Posterior vena cava (tissue), 2 donors: ENCODE measurements at regions of chr12 and their contacts with region 1.

Region 1: DNA sequence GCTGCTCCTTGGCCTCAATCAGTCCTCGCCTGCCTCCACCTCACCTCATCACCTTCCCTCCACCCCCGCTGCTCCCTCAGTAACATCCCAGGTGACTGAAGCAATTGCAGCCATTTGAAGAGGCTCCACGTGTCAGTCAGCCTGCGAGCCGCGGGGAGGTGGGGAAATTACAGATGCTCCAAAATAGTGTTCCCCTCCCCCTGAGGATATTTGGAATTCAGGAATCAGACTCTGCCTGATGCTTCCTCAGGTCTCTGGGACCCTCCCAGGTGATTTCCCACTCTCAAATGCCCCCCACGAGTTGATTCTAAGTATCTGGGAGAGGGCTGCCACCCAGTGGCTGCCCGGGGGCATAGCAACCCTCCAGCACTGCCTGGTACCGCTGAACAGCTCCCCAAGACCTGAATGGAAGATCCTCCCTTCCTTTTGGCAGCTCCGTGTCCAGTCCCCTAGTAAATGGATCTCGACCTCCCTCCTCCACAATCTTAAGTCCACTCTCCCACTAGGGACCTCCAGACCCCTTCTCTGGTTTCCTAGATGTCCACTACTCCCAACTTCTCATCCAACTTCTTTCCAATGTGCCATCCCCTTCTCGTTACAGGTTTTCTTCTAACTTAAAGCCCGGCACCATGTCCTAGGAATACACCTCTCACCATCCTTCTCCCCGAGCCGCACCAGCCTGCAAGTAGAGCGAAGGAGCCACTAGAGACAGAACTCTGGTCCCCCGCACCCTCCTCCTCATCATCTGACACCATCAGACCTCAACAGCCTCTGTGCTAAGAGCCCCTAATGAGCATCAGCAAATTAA is 1.4 kb upstream of the ASIC1 start:
- DNase-seq: no peak

Region 2: GRCh38 chr12:49866859-49867579 is 189.0 kb before region 1 on chr12:
- intact Hi-C with region 1: loop called in 1 of 2 experiments (anchors 10 kb)
- DNase-seq: peak; percentile 91

Region 3: DNA sequence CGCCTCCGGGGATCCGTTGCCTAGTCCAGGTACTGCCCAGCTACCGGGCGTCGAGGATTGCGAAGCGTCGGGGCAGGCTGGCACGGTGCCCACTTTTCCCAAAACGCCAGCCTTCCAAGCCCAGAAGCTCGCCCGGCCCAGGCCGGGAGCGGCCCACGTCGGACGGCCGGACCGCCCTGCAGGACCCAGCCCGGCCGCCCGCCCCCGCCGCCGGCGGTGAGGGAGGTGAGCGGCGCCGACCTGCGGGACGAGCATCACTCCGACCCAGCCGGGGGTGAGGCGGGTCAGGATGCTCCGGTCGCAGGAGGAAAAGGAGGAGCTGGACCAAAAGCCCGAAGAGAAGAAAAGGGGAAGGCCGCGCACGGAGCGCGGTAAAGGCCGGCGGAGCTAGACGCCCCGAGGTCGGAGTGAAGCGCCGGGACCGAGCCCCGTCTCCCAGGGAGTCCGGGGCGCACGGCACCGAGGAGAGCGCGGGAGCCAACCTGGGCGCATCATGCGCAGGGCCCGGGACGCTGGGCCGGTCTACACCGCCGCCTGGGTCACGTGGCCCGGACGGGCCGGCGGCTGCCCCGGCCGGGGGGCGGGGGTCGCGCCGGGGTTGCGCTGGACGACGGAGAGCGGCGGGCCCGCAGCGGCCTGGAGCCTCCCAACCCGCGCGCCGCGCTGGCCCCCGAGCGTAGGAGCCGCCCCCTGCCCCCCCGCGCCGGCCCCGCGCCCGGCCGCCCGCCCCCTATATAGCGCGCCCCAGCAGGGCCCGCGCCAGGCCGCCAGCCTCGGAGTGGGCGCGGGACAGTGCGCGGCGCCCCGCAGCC is 94.7 kb before region 1 on chr12 and contains the start of gene AQP5:
- intact Hi-C with region 1: loop called (anchors 1 to 5 kb)
- DNase-seq: no peak
- total RNA-seq, gene AQP5: not detected

Region 4: DNA sequence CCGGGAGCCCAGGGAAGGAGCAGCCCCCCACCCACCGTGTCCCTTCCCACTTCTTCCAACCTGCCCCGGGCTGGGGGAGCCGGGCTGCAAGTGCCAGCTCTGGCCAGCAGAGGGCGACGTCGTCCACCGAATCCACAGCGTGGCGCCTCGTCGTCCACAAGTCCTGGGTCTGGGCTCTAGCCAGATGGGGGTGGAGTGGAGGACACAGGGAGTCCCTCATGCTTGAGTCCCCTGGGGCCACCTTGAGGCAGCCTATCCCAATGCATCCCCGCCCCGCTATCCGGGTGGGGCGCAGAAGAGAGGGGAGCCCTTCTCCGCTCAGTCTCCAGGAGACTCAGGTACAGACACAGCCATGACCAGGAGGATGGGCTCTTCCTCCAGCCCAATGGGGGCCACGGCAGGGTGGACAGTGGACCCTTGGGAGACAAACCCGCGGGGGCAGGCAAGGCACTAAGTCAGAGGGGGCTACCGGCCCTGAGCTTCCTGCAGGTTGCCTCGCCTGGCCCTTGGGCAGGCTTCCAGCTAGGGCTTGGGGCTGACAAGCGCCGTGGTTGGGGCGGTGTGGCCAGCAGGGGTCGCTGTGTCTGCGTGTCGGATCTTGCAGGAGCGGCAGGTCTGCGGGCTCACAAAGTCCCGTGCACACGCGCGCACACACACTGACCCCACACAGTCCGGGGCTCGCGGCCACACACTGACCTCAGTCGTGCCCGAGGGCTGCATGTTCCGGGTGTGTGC is 88.8 kb before region 1 on chr12:
- intact Hi-C with region 1: loop called in 1 of 2 experiments (anchors 5 kb)
- DNase-seq: peak; percentile 98

Region 5: DNA sequence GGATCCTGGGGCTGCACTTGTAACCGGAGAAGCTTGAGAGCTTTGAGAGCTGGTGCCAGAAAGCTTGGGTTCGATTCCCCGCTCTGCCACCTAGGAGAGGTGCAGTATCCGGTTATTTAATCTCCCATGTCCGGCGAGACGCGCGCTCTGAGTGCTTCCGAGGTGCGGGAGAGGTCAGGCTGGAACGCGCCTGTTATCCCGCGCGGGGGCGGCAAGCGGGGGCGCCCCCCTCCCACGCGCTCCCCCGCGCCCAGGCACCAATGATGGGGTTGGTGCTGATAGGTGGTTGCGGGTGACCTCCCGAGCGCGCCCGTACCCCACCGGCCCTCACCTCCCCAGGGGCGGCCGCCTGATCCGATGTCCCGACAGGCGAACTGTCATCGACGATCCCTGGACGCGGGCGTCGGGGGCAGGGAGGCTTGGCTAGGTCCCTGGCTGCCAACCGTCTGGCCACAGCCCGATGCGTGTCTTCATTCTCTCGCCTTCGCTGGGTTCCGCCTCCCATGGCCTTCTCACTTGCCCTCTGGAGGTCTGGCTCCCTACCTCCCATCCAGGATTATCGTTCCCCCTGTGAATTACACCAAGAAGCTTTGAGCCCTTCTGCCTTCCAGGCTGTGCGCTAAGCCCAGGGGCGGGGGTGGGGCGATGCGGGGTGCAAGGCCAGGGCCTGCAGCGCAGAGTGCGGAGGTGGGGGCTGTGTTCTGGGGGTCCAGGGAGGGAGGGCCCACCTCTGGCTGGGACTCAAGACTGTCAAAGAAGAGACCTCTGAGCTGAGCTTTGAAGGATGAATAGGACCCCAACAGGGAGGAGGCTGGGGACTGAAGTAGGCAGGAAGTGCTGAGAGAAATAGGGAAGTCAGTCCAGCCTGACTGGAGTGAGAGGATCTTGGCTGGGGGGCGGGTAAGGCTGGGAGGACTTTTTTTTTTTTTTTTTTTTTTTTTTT is 23.1 kb before region 1 on chr12:
- intact Hi-C with region 1: no loop called
- DNase-seq: no peak